Dorsolateral prefrontal cortex (tissue), 120 donors: ENCODE measurements at regions of chr5 and their contacts with region 1.

Region 1: GRCh38 chr5:80686757-80687156 is 32.0 kb upstream of the DHFR start:
- DNase-seq: no peak
- H3K4me3 ChIP-seq: no peak overlapping the region
- H3K27ac ChIP-seq: peak overlapping the region in 2 of 59 donors; percentile 13 to 40
- H3K27me3 ChIP-seq: no peaks in the 10 kb centered on the region
- CTCF ChIP-seq: peak; percentile 30 to 83 (median 62)

Region 2: GRCh38 chr5:81194633-81195333 is 508.0 kb after region 1 on chr5:
- intact Hi-C with region 1: loop called (anchors 1 to 10 kb)
- DNase-seq: peak; percentile 76 to 89 (median 83)
- H3K4me3 ChIP-seq: peak overlapping the region in 36 of 59 donors; percentile 0 to 42 (median 20)
- H3K27ac ChIP-seq: peak overlapping the region in 25 of 59 donors; percentile 2 to 73 (median 29)
- H3K27me3 ChIP-seq: no peaks in the 10 kb centered on the region
- CTCF ChIP-seq: peak; percentile 80 to 99 (median 95)

Region 3: DNA sequence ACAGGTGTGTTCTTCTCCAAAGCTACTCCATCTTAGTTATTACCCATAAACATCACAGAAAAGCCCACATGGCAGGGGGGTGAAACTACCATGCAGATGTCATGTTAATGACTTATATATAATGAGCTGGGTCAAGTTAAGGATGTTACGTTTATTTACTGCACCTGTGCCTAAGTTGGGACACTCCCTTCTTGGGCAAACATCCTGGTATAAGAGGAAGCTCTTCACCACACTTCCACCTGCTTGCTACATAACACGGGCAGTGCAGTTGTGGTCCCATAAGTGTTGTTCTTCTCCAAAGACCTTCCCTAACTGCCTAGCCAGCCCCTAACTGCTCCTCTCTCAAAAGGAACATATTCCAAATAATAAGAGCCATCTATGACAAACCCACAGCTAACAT is 605.4 kb after region 1 on chr5:
- intact Hi-C with region 1: loop called (anchors 5 to 10 kb)
- DNase-seq: no peak
- H3K4me3 ChIP-seq: no peak overlapping the region
- H3K27ac ChIP-seq: no peak overlapping the region
- H3K27me3 ChIP-seq: no peaks in the 10 kb centered on the region
- CTCF ChIP-seq: no peak

Region 4: DNA sequence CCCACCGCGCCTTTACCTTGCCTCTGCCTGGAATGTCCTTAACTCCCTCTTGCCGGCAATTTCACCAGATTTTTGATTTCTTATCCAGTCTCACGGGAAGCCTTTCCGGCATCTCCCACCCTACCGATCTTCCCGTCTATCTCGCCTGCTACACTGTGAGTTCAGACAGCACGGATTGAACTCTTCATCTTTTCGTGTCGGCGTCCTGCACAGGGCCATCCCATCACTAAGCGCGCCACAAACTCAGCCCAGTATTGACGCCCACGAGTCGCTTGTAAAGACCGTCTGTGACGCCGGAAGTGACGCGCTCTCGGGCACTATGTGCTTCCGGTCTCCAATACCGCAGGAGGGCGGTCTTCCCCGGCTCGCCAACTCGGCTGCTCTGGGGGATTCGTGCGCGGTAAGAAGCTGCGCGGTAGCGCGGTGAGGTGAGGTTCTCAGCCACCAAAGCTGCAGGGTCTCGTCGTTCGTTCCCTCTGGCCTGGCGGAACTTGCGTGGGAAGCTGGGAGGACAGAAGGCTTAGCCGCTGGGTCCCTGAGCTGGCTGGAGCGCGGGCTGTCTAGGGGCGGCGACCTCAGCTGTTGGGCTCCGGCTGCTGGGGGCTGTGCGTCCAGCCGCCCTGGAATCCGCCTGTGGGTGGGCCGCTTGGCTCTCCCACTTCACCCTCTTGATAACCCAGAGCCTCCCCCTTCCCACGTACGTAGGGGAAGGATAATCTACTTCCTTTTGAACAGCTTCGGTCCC is 614.7 kb after region 1 on chr5 and contains the start of gene ZCCHC9:
- intact Hi-C with region 1: loop called (anchors 5 to 10 kb)
- DNase-seq: peak; percentile 88 to 94 (median 93)
- H3K4me3 ChIP-seq: peak within 1 kb of the TSS; percentile 79 to 99 (median 92)
- H3K27ac ChIP-seq: peak within 1 kb of the TSS; percentile 52 to 95 (median 86)
- H3K27me3 ChIP-seq: no peaks in the 10 kb centered on the region
- CTCF ChIP-seq: peak; percentile 18 to 76 (median 59)
- total RNA-seq, gene ZCCHC9: 8.6 to 20.8 (median 14.3) TPM